Activated CD4-positive, alpha-beta memory T cell treated with anti-CD3 and anti-CD28 coated beads, Interleukin-2, amount 10 ng/mL, durations not matched to agents 7 days and 5 days (primary cell): ENCODE measurements at regions of chr9 and their contacts with region 1.

Region 1: DNA sequence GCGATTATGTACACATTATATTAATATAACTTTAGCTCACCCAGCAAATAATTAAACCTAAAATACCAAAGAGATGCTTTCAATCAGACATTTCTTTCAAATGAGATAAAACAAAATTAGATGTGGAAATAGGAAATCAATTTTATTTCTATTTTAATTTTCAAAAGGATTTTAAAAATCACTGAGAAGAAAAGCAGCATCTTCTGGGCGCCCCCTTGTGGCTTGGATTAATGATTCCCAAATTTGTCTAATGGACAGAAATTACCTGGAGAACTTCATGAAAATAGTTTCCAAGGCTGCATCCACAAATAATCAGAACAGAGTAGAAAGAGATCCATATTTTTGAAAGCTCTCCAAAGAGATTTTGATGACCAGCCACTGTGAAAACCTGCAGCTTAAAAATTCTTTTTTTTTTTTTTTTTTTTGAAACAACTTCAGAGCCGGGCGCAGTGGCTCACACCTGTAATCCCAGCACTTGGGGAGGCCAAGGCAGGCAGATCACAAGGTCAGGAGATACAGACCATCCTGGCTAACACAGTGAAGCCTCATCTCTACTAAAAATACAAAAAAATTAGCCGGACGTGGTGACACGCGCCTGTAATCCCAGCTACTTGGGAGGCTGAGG is 50.9 kb upstream of the CEMIP2 start:
- DNase-seq: peak; percentile 36
- H3K4me3 Mint-ChIP-seq: no peak overlapping the region
- H3K27ac Mint-ChIP-seq: no peak overlapping the region
- H3K4me1 Mint-ChIP-seq: peaks cover 19% of the 10 kb centered on the region
- H3K27me3 Mint-ChIP-seq: no peaks in the 10 kb centered on the region

Region 2: GRCh38 chr9:71830153-71830552 is 10.9 kb after region 1 on chr9:
- CTCF ChIA-PET with region 1: interaction called, 17 read pairs
- POLR2A ChIA-PET with region 1: no interaction called
- DNase-seq: no peak
- H3K4me3 Mint-ChIP-seq: no peak overlapping the region
- H3K27ac Mint-ChIP-seq: no peak overlapping the region
- H3K4me1 Mint-ChIP-seq: no peaks in the 10 kb centered on the region
- H3K27me3 Mint-ChIP-seq: peaks cover 15% of the 10 kb centered on the region